ENCODE measurements at regions of chr10 and their contacts with region 1.

Region 1: DNA sequence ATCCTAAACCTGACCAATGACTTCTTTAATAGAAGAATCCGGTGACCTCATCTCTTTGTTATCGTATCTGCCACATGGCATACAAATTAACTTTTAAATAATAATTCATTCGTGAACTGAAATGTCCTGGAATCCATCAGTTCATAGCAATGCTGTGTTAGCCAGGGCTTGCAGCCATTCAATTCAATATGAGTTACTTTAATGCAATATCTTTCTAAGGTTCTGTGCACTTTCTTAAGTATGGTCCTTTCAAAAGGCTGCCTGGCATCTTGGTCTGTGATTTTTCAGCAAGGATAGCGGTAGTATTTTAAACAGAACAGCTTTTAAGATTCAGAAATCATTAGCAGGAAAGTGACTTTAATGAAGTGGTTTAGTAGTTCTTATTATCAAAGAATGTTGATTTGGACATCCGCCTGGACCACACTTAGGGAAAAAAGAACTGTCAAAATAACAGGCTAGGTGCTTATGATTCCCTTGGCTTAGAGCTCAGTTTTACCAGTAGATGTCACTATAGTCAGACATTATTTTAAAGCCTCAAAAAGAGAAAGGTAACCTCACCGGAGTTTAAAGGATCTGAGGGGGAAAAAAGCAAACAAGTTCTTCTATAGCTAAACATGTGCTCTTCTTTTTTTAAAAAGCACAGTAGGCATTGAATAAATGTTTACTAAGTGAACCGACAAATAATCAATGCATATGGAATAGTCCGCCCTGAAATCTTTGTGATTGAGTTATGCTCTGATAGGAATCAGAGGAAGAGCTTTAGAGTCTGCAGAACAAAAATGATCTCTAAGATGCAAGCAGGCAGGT is 22.7 kb downstream of the SLC35G1 start:
- DNase-seq: no peak
- H3K4me3 ChIP-seq: no peak overlapping the region
- H3K4me3 Mint-ChIP-seq: no peak overlapping the region
- H3K27ac ChIP-seq: no peak overlapping the region
- H3K27ac Mint-ChIP-seq: no peak overlapping the region
- H3K4me1 ChIP-seq: no peaks in the 10 kb centered on the region
- H3K4me1 Mint-ChIP-seq: peaks cover 0 to 4% (median 0%) of the 10 kb centered on the region in 4 donors
- H3K27me3 ChIP-seq: no peaks in the 10 kb centered on the region
- H3K27me3 Mint-ChIP-seq: no peaks in the 10 kb centered on the region

Region 2: DNA sequence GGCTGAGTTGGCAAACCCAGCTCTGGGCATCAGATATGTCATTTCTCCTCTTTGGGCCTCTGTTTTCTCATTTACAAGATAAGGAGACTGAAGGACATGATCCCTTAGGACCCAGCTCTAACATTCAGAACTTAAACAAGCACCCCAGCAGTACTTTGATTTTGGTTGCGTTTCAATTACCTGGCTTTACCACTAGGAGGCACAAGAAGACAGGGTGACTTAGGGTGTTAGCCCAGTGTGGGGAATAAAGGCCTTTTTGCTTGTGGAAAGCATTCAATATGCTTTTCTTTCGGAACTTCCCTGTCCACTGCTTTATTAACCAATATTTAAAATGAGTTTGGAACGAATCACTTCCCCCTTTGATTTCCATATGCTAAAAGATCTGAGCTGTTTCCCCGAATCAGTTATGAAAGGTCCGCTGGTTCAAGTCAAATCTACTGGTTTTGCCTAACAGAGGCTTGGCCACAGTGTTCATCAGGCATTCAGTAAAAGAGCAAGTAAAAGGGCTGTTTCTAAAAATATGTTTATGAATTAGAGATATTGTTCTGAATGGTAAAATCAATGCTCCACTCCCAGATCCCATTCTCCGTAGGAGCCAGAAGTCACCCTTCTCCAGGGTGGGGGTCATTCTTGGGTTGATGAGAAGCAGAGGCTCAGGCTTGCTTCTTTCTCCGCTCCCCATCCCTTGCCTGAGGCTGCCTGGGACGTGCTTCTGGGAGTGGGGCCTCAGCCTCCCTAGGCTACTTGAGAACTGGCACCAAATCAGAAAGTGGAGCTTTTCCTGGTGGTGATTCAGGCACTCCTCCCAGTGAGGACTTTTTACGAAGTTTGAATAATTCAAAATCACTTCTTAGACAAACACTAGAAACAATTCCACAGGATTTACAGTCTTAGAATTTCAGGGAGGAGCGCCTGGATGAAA is 539.8 kb before region 1 on chr10:
- CTCF ChIA-PET with region 1: no interaction called
- POLR2A ChIA-PET with region 1: no interaction called
- intact Hi-C with region 1: no loop called
- DNase-seq: peak; percentile 62 to 75 (median 69)
- H3K4me3 ChIP-seq: no peak overlapping the region
- H3K4me3 Mint-ChIP-seq: no peak overlapping the region
- H3K27ac ChIP-seq: no peak overlapping the region
- H3K27ac Mint-ChIP-seq: peak overlapping the region in 1 of 7 donors; percentile 38
- H3K4me1 ChIP-seq: peaks cover 11% of the 10 kb centered on the region
- H3K4me1 Mint-ChIP-seq: peaks cover 9 to 18% (median 9%) of the 10 kb centered on the region in 4 donors
- H3K27me3 ChIP-seq: no peaks in the 10 kb centered on the region
- H3K27me3 Mint-ChIP-seq: peaks cover 0 to 1% of the 10 kb centered on the region in 2 donors

Region 3: DNA sequence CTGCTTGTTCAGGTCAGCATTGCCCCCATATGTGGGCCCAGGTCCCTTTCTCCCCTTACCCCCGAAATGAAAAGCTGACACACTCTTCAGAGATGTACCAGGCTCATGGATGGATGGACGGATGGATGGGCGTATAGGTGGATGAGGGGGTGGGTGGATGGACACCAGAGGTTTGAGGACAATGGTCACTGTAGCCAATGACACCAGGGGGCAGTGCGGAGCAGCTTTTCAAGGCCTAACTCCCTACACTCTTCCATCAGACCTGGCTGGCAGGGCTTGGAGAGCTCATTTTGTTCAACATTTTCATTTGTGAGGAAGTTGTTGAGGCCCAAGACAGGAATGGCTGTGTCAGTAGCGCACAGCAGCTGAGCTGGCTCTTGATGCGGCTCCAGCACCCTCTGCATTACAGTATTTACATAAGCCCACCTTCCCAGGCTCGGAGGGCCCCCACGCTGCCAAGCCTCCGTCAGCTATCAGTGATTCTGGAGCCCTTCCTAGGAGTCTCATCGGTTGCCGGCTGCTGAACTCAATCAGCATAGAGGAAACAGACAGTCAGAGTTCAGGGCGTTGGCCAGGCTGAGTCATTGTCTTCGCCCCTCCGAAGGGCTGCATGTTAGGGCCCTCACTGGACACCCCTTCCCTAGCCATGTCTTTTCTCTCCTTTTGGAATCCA is 361.6 kb before region 1 on chr10:
- CTCF ChIA-PET with region 1: interaction called, 18 read pairs
- POLR2A ChIA-PET with region 1: no interaction called
- intact Hi-C with region 1: loop called (anchors 10 kb)
- DNase-seq: peak in 3 of 5 donors; percentile 6 to 16 (median 10)
- H3K4me3 ChIP-seq: no peak overlapping the region
- H3K4me3 Mint-ChIP-seq: no peak overlapping the region
- H3K27ac ChIP-seq: no peak overlapping the region
- H3K27ac Mint-ChIP-seq: no peak overlapping the region
- H3K4me1 ChIP-seq: no peaks in the 10 kb centered on the region
- H3K4me1 Mint-ChIP-seq: peaks cover 0 to 2% (median 0%) of the 10 kb centered on the region in 4 donors
- H3K27me3 ChIP-seq: no peaks in the 10 kb centered on the region
- H3K27me3 Mint-ChIP-seq: peaks cover 9 to 13% of the 10 kb centered on the region in 2 donors

Region 4: GRCh38 chr10:93697207-93697606 is 219.3 kb before region 1 on chr10:
- CTCF ChIA-PET with region 1: interaction called, 4 read pairs
- POLR2A ChIA-PET with region 1: no interaction called
- intact Hi-C with region 1: loop called (anchors 10 kb)
- DNase-seq: no peak
- H3K4me3 ChIP-seq: no peak overlapping the region
- H3K4me3 Mint-ChIP-seq: no peak overlapping the region
- H3K27ac ChIP-seq: no peak overlapping the region
- H3K27ac Mint-ChIP-seq: peak overlapping the region in 1 of 7 donors; percentile 3
- H3K4me1 ChIP-seq: peaks cover 24% of the 10 kb centered on the region
- H3K4me1 Mint-ChIP-seq: peaks cover 22 to 32% (median 23%) of the 10 kb centered on the region in 4 donors
- H3K27me3 ChIP-seq: no peaks in the 10 kb centered on the region
- H3K27me3 Mint-ChIP-seq: no peaks in the 10 kb centered on the region

Region 5: GRCh38 chr10:93790439-93790838 is 126.0 kb before region 1 on chr10:
- CTCF ChIA-PET with region 1: no interaction called
- POLR2A ChIA-PET with region 1: no interaction called
- intact Hi-C with region 1: no loop called
- DNase-seq: no peak
- H3K4me3 ChIP-seq: no peak overlapping the region
- H3K4me3 Mint-ChIP-seq: no peak overlapping the region
- H3K27ac ChIP-seq: no peak overlapping the region
- H3K27ac Mint-ChIP-seq: no peak overlapping the region
- H3K4me1 ChIP-seq: no peaks in the 10 kb centered on the region
- H3K4me1 Mint-ChIP-seq: no peaks in the 10 kb centered on the region
- H3K27me3 ChIP-seq: no peaks in the 10 kb centered on the region
- H3K27me3 Mint-ChIP-seq: peaks cover 10 to 18% of the 10 kb centered on the region in 2 donors

Region 6: GRCh38 chr10:93816123-93816747 is 100.2 kb before region 1 on chr10:
- CTCF ChIA-PET with region 1: interaction called, 12 read pairs
- POLR2A ChIA-PET with region 1: interaction called, 3 read pairs
- intact Hi-C with region 1: no loop called
- DNase-seq: peak in 4 of 5 donors; percentile 9 to 16 (median 10)
- H3K4me3 ChIP-seq: no peak overlapping the region
- H3K4me3 Mint-ChIP-seq: no peak overlapping the region
- H3K27ac ChIP-seq: no peak overlapping the region
- H3K27ac Mint-ChIP-seq: no peak overlapping the region
- H3K4me1 ChIP-seq: no peaks in the 10 kb centered on the region
- H3K4me1 Mint-ChIP-seq: peaks cover 0 to 3% (median 0%) of the 10 kb centered on the region in 4 donors
- H3K27me3 ChIP-seq: no peaks in the 10 kb centered on the region
- H3K27me3 Mint-ChIP-seq: peaks cover 22 to 33% of the 10 kb centered on the region in 2 donors

Region 7: DNA sequence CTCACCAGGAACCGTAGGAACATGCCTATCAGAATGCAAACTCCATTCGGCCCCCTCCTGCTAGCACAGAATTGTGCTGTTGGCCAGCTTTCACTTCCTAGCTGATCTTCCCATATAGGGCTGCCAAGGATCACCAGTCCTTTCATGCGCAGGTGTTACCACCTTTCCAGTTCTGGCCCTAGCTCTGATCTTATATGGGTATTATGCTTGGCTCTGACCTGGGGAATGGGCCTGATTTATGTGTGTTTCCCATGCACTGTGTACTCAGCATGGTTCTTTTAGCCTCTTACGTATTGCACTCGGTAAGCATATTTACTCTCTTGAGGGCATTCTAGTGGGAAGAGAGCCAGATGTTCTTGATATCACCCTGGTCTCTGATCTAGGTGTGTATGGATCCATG is 11.6 kb before region 1 on chr10:
- CTCF ChIA-PET with region 1: interaction called, 11 read pairs
- POLR2A ChIA-PET with region 1: no interaction called
- intact Hi-C with region 1: no loop called
- DNase-seq: no peak
- H3K4me3 ChIP-seq: no peak overlapping the region
- H3K4me3 Mint-ChIP-seq: no peak overlapping the region
- H3K27ac ChIP-seq: no peak overlapping the region
- H3K27ac Mint-ChIP-seq: peak overlapping the region in 1 of 7 donors; percentile 67
- H3K4me1 ChIP-seq: peaks cover 25% of the 10 kb centered on the region
- H3K4me1 Mint-ChIP-seq: peaks cover 17 to 31% (median 18%) of the 10 kb centered on the region in 4 donors
- H3K27me3 ChIP-seq: no peaks in the 10 kb centered on the region
- H3K27me3 Mint-ChIP-seq: no peaks in the 10 kb centered on the region